ENCODE measurements at regions of chr13 and their contacts with region 1.

Region 1: GRCh38 chr13:113187263-113187669 is 21.2 kb downstream of the PCID2 start:
- DNase-seq: peak in 1 of 2 donors; percentile 27
- ATAC-seq: no peak
- H3K4me3 ChIP-seq: no peak overlapping the region
- H3K4me3 Mint-ChIP-seq: peak overlapping the region; percentile 59
- H3K27ac ChIP-seq: peak overlapping the region; percentile 67
- H3K27ac Mint-ChIP-seq: peak overlapping the region; percentile 72 to 99
- H3K4me1 ChIP-seq: peaks cover 45% of the 10 kb centered on the region
- H3K4me1 Mint-ChIP-seq: peaks cover 48 to 57% of the 10 kb centered on the region in 2 donors
- H3K27me3 ChIP-seq: no peaks in the 10 kb centered on the region
- H3K27me3 Mint-ChIP-seq: peaks cover 0 to 2% of the 10 kb centered on the region in 2 donors
- CTCF ChIP-seq: no peak

Region 2: DNA sequence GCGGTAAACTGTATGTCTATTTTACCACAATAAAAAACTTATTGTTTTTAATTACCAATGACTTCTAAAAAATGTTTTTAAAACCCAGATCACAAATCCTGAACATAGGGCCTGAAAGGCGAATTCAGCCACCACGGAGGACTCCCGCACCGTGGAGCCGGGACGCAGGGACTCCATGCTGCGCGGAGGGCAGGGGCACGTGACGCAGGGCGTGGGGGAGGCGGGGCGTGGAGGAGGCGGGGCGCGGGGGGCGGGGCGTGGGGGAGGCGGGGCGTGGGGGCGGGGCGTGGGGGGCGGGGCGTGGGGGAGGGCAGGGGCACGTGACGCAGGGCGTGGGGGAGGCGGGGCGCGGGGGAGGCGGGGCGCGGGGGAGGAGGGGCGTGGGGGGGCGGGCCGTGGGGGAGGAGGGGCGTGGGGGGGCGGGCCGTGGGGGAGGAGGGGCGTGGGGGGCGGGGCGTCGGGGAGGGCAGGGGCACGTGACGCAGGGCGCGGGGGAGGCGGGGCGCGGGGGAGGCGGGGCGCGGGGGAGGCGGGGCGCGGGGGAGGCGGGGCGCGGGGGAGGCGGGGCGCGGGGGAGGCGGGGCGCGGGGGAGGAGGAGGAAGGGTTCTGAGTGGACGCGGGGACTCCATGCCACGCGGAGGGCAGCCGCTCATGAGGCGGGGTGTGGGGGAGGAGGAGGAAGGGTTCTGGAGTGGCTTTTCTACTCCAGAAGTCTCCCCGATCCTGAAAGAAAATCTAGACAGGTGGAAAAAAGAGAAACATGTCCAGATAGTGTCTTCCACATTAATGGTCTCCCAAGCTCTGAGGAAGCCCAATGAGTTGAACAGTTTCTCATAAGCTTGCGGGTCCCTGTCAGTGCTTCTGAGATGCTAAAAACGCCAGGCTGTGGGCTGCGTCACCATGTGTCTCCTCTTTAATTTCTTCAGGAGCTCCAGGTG is 33.2 kb before region 1 on chr13:
- intact Hi-C with region 1: loop called (anchors 5 kb)
- DNase-seq: peak; percentile 62 to 89
- ATAC-seq: peak; percentile 78 to 84 (median 83)
- H3K4me3 ChIP-seq: peak overlapping the region; percentile 41
- H3K4me3 Mint-ChIP-seq: peak overlapping the region; percentile 80
- H3K27ac ChIP-seq: peak overlapping the region; percentile 43
- H3K27ac Mint-ChIP-seq: peak overlapping the region; percentile 80 to 83
- H3K4me1 ChIP-seq: peaks cover 28% of the 10 kb centered on the region
- H3K4me1 Mint-ChIP-seq: peaks cover 23 to 27% of the 10 kb centered on the region in 2 donors
- H3K27me3 ChIP-seq: peaks cover 15% of the 10 kb centered on the region
- H3K27me3 Mint-ChIP-seq: peaks cover 0 to 21% of the 10 kb centered on the region in 2 donors
- CTCF ChIP-seq: no peak

Region 3: DNA sequence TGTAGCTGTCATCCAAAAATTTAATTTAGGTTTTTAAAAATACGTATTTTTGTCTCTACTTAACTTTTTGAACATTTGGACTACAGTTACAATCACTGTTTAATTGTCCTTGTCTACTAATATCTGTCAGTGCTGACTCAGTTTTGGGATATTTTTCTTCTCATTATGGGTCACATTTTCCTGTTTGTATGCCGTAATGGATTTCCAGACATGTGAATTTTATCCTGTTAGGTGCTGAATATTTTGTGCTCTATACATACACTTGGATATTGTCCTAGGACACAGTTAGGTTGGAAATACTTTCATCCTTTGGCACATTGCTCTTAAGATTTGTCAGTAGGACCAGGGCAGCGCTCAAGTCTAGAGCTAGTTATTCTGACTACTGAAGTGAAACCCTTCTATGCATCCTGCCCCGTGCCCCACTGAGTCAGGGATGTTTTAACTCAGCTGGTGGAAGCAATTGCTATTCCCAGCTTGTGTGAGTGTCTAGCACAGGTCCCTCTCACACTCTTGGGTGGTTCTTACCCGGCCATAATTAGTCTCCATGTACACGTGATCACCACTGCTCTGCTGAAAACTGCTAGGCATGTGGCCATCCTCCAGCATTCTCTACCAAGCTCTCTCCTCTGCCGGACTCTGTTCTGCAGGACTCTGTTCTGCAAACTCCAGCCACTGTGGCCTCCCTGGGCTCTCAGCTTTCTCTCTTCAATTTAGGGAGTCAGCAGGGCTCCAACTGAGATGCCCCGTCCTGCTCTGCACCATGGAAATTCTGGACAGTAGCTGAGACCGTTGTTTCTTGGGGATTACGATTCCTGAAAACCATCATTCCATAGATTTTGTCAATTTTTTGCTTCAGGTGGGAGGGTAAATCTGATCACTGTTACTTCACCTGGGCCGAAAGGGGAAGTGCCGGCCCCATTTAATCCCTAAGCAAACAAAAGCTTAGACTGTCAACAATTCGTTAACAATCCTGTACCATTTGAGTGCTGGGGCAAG is 17.7 kb before region 1 on chr13:
- intact Hi-C with region 1: no loop called
- DNase-seq: no peak
- ATAC-seq: no peak
- H3K4me3 ChIP-seq: no peak overlapping the region
- H3K4me3 Mint-ChIP-seq: no peak overlapping the region
- H3K27ac ChIP-seq: no peak overlapping the region
- H3K27ac Mint-ChIP-seq: peak overlapping the region in 1 of 2 donors; percentile 100
- H3K4me1 ChIP-seq: peaks cover 24% of the 10 kb centered on the region
- H3K4me1 Mint-ChIP-seq: peaks cover 13 to 55% of the 10 kb centered on the region in 2 donors
- H3K27me3 ChIP-seq: no peaks in the 10 kb centered on the region
- H3K27me3 Mint-ChIP-seq: no peaks in the 10 kb centered on the region
- CTCF ChIP-seq: no peak

Region 4: GRCh38 chr13:113208424-113209335 is 21.4 kb after region 1 on chr13 and contains the start of gene PCID2:
- intact Hi-C with region 1: loop called (anchors 2 kb)
- DNase-seq: peak; percentile 93 to 96
- ATAC-seq: peak; percentile 76 to 88 (median 76)
- H3K4me3 ChIP-seq: peak within 1 kb of the TSS; percentile 75
- H3K4me3 Mint-ChIP-seq: peak within 1 kb of the TSS; percentile 89
- H3K27ac ChIP-seq: peak within 1 kb of the TSS; percentile 99
- H3K27ac Mint-ChIP-seq: peak within 1 kb of the TSS; percentile 77 to 88
- H3K4me1 ChIP-seq: peaks cover 35% of the 10 kb centered on the region
- H3K4me1 Mint-ChIP-seq: peaks cover 49 to 56% of the 10 kb centered on the region in 2 donors
- H3K27me3 ChIP-seq: no peaks in the 10 kb centered on the region
- H3K27me3 Mint-ChIP-seq: no peaks in the 10 kb centered on the region
- CTCF ChIP-seq: no peak
- total RNA-seq, gene PCID2: 26.4 to 68.9 (median 42.3) TPM

Region 5: GRCh38 chr13:113296842-113297369 is 109.6 kb after region 1 on chr13 and contains the start of gene LAMP1:
- intact Hi-C with region 1: loop called (anchors 5 kb)
- DNase-seq: peak; percentile 98 to 100
- ATAC-seq: peak; percentile 76 to 90 (median 82)
- H3K4me3 ChIP-seq: peak within 1 kb of the TSS; percentile 89
- H3K4me3 Mint-ChIP-seq: peak within 1 kb of the TSS; percentile 100
- H3K27ac ChIP-seq: peak within 1 kb of the TSS; percentile 92
- H3K27ac Mint-ChIP-seq: peak within 1 kb of the TSS; percentile 89 to 99
- H3K4me1 ChIP-seq: peaks cover 29% of the 10 kb centered on the region
- H3K4me1 Mint-ChIP-seq: peaks cover 32 to 33% of the 10 kb centered on the region in 2 donors
- H3K27me3 ChIP-seq: peaks cover 2% of the 10 kb centered on the region
- H3K27me3 Mint-ChIP-seq: peaks cover 17 to 22% of the 10 kb centered on the region in 2 donors
- CTCF ChIP-seq: no peak
- total RNA-seq, gene LAMP1: 137 to 168 (median 159) TPM

Region 6: GRCh38 chr13:113879494-113880360 is 692.5 kb after region 1 on chr13:
- intact Hi-C with region 1: loop called (anchors 10 kb)
- DNase-seq: no peak
- ATAC-seq: no peak
- H3K4me3 ChIP-seq: no peak overlapping the region
- H3K4me3 Mint-ChIP-seq: peak overlapping the region; percentile 19
- H3K27ac ChIP-seq: no peak overlapping the region
- H3K27ac Mint-ChIP-seq: no peak overlapping the region
- H3K4me1 ChIP-seq: peaks cover 46% of the 10 kb centered on the region
- H3K4me1 Mint-ChIP-seq: peaks cover 21 to 51% of the 10 kb centered on the region in 2 donors
- H3K27me3 ChIP-seq: no peaks in the 10 kb centered on the region
- H3K27me3 Mint-ChIP-seq: peaks cover 0 to under 1% of the 10 kb centered on the region in 2 donors
- CTCF ChIP-seq: no peak

Measured in natural killer cell (primary cell).